ENCODE measurements at regions of chr3 and their contacts with region 1.

Region 1: GRCh38 chr3:62622553-62623193 is 249.3 kb upstream of the FEZF2 start:
- DNase-seq: no peak
- ATAC-seq: peak in 4 of 8 donors; percentile 33 to 63 (median 42)
- H3K4me3 ChIP-seq: no peak overlapping the region
- H3K27ac ChIP-seq: no peak overlapping the region
- H3K4me1 ChIP-seq: no peaks in the 10 kb centered on the region
- H3K27me3 ChIP-seq: no peaks in the 10 kb centered on the region
- CTCF ChIP-seq: peak; percentile 47 to 77 (median 68)

Region 2: GRCh38 chr3:62844837-62845236 is 222.2 kb after region 1 on chr3:
- intact Hi-C with region 1: no loop called
- DNase-seq: no peak
- ATAC-seq: no peak
- H3K4me3 ChIP-seq: no peak overlapping the region
- H3K27ac ChIP-seq: no peak overlapping the region
- H3K4me1 ChIP-seq: no peaks in the 10 kb centered on the region
- H3K27me3 ChIP-seq: no peaks in the 10 kb centered on the region
- CTCF ChIP-seq: no peak

Region 3: DNA sequence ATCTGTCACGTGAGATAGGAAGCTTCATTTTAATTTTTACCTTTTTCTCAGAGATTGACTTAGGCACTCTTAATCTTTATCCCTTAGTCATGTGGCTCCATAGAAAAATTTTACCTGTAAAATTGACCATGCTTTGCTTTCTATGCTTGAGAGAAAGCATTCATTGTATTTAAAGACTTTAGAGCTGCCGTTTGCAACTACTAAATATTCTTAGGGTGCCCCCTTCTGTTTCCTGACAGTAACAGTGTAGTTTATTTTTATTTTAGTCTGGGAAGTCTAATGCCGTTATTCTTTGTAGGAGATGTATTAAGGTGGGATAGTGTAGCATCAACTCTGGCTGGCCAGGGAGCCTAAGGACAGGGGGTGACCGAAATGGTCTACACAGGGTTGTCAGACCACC is 571.0 kb after region 1 on chr3:
- intact Hi-C with region 1: loop called in 2 of 10 experiments (anchors 1 to 2 kb)
- DNase-seq: no peak
- ATAC-seq: peak in 2 of 8 donors; percentile 37 to 49
- H3K4me3 ChIP-seq: no peak overlapping the region
- H3K27ac ChIP-seq: no peak overlapping the region
- H3K4me1 ChIP-seq: no peaks in the 10 kb centered on the region
- H3K27me3 ChIP-seq: no peaks in the 10 kb centered on the region
- CTCF ChIP-seq: peak; percentile 4 to 63 (median 41)

Region 4: DNA sequence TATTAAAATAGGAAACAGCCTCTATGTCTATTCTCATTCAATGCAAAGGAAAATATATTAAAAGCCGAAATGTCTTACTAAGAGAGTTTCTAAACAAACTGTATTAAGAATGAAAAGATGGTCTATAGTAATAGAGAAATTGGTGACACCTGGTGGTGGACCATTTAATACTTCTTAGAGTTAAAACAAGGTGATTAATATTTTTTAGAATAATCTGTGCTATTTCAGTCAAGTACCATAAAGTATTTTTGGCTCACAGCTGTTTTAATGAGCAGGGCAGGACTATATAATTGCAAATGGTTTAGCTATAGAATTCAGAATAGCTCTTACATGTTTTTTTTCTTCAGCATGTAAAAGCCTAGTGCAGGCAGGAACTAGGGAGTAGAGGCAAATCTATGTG is 711.2 kb after region 1 on chr3:
- intact Hi-C with region 1: loop called in 5 of 10 experiments (anchors 5 to 10 kb)
- DNase-seq: no peak
- ATAC-seq: no peak
- H3K4me3 ChIP-seq: no peak overlapping the region
- H3K27ac ChIP-seq: no peak overlapping the region
- H3K4me1 ChIP-seq: peaks cover 0 to 11% (median 0%) of the 10 kb centered on the region in 9 donors
- H3K27me3 ChIP-seq: no peaks in the 10 kb centered on the region
- CTCF ChIP-seq: peak in 4 of 9 donors; percentile 30 to 47 (median 34)

Region 5: DNA sequence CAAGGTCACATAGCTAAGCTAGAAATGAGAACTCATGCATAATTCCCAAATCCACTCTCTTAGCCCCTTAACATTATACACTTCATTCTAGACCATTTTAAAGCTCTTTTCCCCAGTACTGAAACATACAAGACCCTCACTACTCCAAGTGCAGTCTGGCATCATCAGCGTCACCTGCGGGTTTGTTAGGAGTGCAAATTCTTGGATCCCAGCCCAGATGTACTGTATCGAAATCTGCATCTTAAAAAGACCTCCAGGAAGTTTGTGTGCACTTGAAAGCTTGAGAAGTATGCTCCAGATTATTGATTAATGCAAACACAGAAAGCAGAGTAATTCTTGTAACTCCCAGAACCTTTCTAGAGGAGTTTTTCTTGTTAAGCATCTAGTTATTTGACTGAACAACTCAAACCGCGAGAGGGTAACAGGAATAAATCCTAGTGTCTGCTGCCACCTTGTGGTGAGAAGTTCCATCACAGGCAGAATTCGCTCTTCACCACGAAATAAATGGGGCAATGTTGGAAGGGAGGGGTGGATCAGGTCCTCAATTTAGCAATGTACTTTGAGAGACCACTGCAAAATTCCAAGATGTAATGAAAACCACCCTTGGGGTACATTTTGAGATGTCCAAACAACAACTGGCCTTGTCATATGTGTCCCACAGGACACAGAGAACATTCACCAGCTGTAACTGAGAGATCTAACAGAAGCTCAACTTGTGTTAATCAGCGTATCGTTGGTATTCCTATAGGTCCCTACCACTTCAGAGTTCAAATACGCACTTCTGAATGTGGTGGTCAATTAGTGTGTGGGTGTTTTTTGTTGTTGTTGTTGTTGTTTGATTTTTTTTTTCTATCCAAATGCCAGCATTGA is 1195.8 kb after region 1 on chr3:
- intact Hi-C with region 1: loop called in 4 of 10 experiments (anchors 5 to 10 kb)
- DNase-seq: peak in 1 of 2 donors; percentile 55
- ATAC-seq: peak in 3 of 8 donors; percentile 67 to 70 (median 67)
- H3K4me3 ChIP-seq: no peak overlapping the region
- H3K27ac ChIP-seq: no peak overlapping the region
- H3K4me1 ChIP-seq: peaks cover 0 to 4% (median 0%) of the 10 kb centered on the region in 9 donors
- H3K27me3 ChIP-seq: no peaks in the 10 kb centered on the region
- CTCF ChIP-seq: peak; percentile 78 to 93 (median 90)